ENCODE measurements at regions of chr3 and their contacts with region 1.

Region 1: GRCh38 chr3:59313365-59313764 is 263.5 kb upstream of the CFAP20DC start:
- DNase-seq: peak; percentile 54
- CTCF ChIP-seq: peak; percentile 57

Region 2: GRCh38 chr3:58631742-58632141 is 681.6 kb before region 1 on chr3:
- CTCF ChIA-PET with region 1: no interaction called
- POLR2A ChIA-PET with region 1: no interaction called
- DNase-seq: no peak
- CTCF ChIP-seq: no peak

Region 3: GRCh38 chr3:59300733-59301132 is 12.6 kb before region 1 on chr3:
- CTCF ChIA-PET with region 1: interaction called, 28 read pairs
- POLR2A ChIA-PET with region 1: no interaction called
- DNase-seq: no peak
- CTCF ChIP-seq: no peak

Region 4: DNA sequence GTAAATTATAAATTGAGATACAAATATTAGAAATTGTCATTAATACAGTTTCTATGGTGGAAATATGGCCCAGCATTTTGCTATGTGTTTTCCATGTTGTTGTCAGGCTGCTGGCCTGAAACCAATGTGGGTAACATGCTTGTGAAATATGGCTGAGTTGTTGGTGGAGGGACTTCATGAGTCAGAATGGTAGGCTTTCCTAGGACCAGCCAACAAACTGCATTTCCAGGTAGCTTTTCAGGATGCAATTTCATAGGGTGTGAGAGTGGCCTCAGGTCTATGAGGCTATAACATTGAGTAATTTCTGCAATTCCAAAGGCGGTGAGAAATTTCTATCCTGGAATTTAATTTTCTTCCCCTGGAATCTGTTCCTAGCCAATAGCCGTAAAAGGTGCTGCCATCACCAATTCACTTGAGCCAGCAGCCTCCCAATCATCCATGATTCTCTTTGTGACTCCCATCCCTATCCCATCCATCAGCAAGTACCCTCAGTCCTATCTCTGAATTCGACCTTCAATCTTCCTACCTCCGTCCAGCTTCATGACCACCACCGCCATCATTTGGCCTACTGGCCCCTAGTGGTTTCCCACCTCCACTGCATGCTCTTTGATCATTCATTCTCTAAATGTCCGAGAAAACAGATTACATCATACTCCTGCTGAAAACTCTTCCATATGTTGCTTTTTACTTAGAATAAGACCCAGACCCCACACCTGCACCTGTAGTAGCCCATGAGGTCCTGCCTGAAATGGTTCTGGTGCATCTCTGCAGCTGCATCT is 13.1 kb after region 1 on chr3:
- CTCF ChIA-PET with region 1: interaction called, 10 read pairs
- POLR2A ChIA-PET with region 1: no interaction called
- DNase-seq: no peak
- CTCF ChIP-seq: peak; percentile 10

Region 5: GRCh38 chr3:59368900-59369675 is 55.7 kb after region 1 on chr3:
- CTCF ChIA-PET with region 1: interaction called, 12 read pairs
- POLR2A ChIA-PET with region 1: no interaction called
- DNase-seq: no peak
- CTCF ChIP-seq: no peak

Region 6: GRCh38 chr3:59401924-59402323 is 88.6 kb after region 1 on chr3:
- CTCF ChIA-PET with region 1: interaction called, 10 read pairs
- POLR2A ChIA-PET with region 1: no interaction called
- DNase-seq: no peak
- CTCF ChIP-seq: no peak

Region 7: GRCh38 chr3:59412516-59412915 is 99.2 kb after region 1 on chr3:
- CTCF ChIA-PET with region 1: no interaction called
- POLR2A ChIA-PET with region 1: no interaction called
- DNase-seq: no peak
- CTCF ChIP-seq: no peak

Region 8: GRCh38 chr3:59857589-59858346 is 544.4 kb after region 1 on chr3:
- CTCF ChIA-PET with region 1: interaction called, 20 read pairs
- POLR2A ChIA-PET with region 1: no interaction called
- DNase-seq: peak; percentile 76
- CTCF ChIP-seq: peak; percentile 92